Posterior cingulate gyrus (tissue), 11 donors: ENCODE measurements at regions of chr2 and their contacts with region 1.

Region 1: GRCh38 chr2:62724886-62725711 is 19.6 kb downstream of the EHBP1 start:
- DNase-seq: peak; percentile 39 to 96 (median 76)

Region 2: DNA sequence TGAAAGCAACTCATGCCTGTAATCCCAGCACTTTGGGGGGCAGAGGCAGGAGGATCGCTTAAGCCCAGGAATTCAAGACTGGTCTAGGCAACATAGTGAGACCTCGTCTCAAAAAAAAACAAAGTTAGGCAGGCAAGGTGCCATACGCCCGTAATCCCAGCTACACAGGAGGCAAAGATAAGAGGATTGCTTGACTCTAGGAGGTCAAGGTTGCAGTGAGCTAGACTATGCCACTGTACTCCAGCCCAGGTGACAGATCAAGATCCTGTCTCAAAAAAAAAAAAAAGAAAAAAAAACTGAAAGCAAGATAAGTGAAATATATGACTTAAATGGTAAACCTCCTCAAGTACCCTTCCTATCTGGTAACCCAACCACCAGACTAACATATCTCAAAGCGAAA is 1314.0 kb before region 1 on chr2:
- intact Hi-C with region 1: no loop called
- DNase-seq: no peak

Region 3: DNA sequence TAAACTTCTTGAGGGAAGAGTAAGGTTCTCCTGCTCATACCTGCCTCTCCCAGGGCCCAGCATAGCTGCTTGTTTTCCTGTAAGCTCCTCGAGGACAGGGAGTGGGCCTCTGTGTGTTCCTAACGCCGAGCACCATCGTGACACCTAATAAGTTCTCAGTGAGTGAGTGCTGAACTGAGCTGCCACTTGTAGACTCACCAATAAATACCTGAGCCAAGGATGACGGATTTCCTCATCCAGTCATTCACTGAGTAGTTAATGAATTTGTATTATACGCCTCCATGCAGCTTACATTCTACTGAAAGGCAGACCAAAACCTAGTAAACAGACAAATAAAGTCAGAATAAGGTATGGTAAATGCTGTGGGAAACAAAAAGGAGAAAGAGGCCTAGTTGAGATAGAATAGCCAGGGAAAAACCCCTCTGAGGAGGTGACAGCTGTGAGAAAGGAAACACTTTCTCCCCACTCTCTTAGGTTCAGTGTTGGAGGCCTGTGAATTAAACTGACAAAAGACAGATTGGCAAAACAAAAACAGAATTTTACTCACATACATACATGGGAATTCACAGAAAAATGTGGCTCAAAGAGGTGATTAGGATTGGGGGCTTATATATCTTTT is 390.6 kb before region 1 on chr2:
- intact Hi-C with region 1: no loop called
- DNase-seq: no peak

Region 4: GRCh38 chr2:62596061-62596921 is 128.8 kb before region 1 on chr2:
- intact Hi-C with region 1: no loop called
- DNase-seq: no peak

Region 5: DNA sequence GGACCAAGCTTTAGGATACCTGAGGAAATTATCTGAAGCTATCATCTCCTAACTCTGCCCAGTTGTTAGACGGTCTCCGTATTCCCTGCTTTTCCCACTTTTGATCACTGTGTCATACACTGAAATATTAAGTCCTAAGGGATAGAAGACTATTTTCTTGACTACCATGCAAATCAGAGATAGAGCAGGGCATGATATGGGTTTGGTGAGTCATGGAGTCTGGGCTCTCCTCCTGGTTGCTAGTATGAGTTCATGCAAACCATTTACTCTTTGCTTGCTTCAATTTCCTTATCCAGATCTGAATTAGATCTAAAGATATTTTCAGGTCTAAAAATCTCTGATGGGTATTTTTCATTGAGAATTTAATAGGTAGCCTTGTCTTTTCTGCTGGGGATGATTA is 35.5 kb after region 1 on chr2:
- intact Hi-C with region 1: loop called (anchors 2 kb)
- DNase-seq: no peak